ENCODE measurements at regions of chr17 and their contacts with region 1.

Region 1: GRCh38 chr17:19338031-19338990 is 24.2 kb downstream of the B9D1 start:
- DNase-seq: peak; percentile 53
- H3K4me3 Mint-ChIP-seq: no peak overlapping the region
- H3K27ac Mint-ChIP-seq: no peak overlapping the region
- H3K4me1 Mint-ChIP-seq: no peaks in the 10 kb centered on the region
- H3K27me3 Mint-ChIP-seq: no peaks in the 10 kb centered on the region

Region 2: DNA sequence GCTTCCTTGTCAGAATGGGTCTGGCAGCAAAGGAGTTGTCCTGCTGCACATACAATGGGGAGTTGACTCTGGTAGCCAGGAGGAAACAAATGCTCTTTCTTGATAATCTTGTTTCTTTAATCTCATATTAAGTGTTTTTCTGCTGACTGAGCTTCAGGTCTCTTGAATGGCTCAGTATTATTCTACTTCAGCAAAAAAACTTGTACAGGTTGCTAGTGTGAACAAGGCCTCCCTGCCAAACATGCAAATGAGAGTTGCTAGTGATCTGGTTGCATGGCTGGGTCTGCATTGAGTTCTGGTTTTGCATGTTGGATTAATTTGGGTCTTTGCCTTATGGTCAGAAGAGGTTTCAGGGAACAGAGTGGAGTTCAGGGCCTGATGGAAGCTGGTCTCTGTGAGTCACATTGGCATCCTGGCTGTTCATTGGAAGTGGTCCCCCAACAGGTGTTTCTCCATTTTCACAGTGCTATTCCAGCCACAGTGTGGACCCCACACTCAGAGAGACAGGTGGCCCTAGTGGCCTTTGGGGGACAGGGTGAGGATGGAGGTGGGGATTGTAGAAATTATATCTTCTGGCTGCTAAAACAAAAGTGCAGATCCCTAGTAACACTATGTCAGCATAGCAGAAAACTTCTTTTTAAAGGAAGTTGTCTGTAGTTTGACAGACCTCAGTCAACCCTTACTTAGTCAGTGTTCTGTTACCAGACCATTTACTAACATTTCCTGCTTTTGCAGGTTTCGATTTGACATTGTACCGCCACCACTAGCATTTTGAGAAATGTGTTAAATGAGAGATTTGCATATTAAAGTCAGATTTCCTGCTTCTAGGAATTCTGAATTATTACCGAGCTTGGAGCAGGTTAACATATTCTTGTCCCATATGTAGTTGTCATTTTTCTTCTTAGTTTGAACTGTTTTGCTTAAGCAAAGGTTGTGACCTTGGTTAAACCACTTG is 54.0 kb before region 1 on chr17:
- intact Hi-C with region 1: loop called (anchors 5 kb)
- DNase-seq: no peak
- H3K4me3 Mint-ChIP-seq: no peak overlapping the region
- H3K27ac Mint-ChIP-seq: peak overlapping the region; percentile 66
- H3K4me1 Mint-ChIP-seq: peaks cover 27% of the 10 kb centered on the region
- H3K27me3 Mint-ChIP-seq: peaks cover under 1% of the 10 kb centered on the region

Region 3: GRCh38 chr17:19386974-19387920 is 48.9 kb after region 1 on chr17 and contains the start of gene MFAP4:
- intact Hi-C with region 1: no loop called
- DNase-seq: no peak
- H3K4me3 Mint-ChIP-seq: no peak within 1 kb of the TSS
- H3K27ac Mint-ChIP-seq: no peak within 1 kb of the TSS
- H3K4me1 Mint-ChIP-seq: peaks cover 4% of the 10 kb centered on the region
- H3K27me3 Mint-ChIP-seq: peaks cover 22% of the 10 kb centered on the region
- total RNA-seq, gene MFAP4: not detected in 2 replicates